ENCODE measurements at regions of chr22 and their contacts with region 1.

Region 1: GRCh38 chr22:45553351-45554039 is 50.8 kb downstream of the FBLN1 start:
- DNase-seq: peak; percentile 51 to 95
- H3K4me3 ChIP-seq: no peak overlapping the region
- H3K27ac ChIP-seq: no peak overlapping the region
- H3K4me1 ChIP-seq: no peaks in the 10 kb centered on the region
- H3K27me3 ChIP-seq: no peaks in the 10 kb centered on the region
- CTCF ChIP-seq: peak; percentile 85 to 99 (median 99)
- EP300 ChIP-seq: no peak
- POLR2A ChIP-seq: no peak
- RAD21 ChIP-seq: peak; percentile 87 to 90

Region 2: DNA sequence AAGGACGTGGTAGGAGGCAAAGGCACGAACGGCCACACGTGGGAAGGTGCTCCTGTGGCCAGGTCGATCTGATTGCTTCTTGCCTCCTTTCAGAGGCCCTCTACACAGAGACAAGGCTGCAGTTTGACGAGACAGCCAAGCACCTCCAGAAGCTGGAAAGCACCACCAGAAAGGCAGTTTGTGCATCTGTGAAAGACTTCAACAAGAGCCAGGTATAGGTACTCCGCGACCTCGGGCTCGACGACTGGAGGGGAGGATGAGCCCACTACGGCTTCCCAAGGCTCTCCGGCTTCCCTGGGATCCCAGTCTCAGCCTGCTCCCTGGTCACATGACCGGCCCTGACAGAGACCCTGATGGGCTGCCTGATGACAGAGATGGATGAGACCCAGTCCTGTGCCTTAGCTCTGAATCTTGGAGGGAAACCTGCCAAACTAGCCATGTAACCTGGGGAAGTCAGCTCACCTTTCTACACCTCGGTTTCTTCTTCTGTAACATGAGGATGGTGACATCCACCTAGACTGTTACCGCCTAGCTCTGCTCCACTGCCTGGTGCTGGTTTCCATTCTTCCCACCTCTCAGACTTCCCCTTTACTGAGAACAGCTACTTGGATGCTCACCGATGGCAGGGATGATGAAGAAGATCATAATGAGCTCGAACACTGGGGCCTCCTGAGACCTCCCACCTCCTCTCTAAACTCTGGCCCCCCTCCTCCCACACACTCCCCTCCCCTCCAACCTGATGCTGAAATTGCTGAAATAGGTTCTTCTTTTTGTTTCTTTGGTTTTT is 131.1 kb before region 1 on chr22:
- CTCF ChIA-PET with region 1: no interaction called
- POLR2A ChIA-PET with region 1: no interaction called
- DNase-seq: peak in 1 of 2 experiments; percentile 41
- H3K4me3 ChIP-seq: no peak overlapping the region
- H3K27ac ChIP-seq: no peak overlapping the region
- H3K4me1 ChIP-seq: no peaks in the 10 kb centered on the region; a peak in 1 of 7 replicates
- H3K27me3 ChIP-seq: no peaks in the 10 kb centered on the region
- CTCF ChIP-seq: no peak
- EP300 ChIP-seq: no peak
- POLR2A ChIP-seq: no peak
- RAD21 ChIP-seq: no peak

Region 3: GRCh38 chr22:45441138-45441537 is 112.4 kb before region 1 on chr22:
- CTCF ChIA-PET with region 1: interaction called, 30 read pairs
- POLR2A ChIA-PET with region 1: no interaction called
- DNase-seq: no peak
- H3K4me3 ChIP-seq: no peak overlapping the region
- H3K27ac ChIP-seq: no peak overlapping the region
- H3K4me1 ChIP-seq: no peaks in the 10 kb centered on the region; a peak in 2 of 7 replicates
- H3K27me3 ChIP-seq: no peaks in the 10 kb centered on the region
- CTCF ChIP-seq: peak; percentile 44 to 70 (median 58)
- EP300 ChIP-seq: no peak
- POLR2A ChIP-seq: no peak
- RAD21 ChIP-seq: peak; percentile 56 to 67

Region 4: DNA sequence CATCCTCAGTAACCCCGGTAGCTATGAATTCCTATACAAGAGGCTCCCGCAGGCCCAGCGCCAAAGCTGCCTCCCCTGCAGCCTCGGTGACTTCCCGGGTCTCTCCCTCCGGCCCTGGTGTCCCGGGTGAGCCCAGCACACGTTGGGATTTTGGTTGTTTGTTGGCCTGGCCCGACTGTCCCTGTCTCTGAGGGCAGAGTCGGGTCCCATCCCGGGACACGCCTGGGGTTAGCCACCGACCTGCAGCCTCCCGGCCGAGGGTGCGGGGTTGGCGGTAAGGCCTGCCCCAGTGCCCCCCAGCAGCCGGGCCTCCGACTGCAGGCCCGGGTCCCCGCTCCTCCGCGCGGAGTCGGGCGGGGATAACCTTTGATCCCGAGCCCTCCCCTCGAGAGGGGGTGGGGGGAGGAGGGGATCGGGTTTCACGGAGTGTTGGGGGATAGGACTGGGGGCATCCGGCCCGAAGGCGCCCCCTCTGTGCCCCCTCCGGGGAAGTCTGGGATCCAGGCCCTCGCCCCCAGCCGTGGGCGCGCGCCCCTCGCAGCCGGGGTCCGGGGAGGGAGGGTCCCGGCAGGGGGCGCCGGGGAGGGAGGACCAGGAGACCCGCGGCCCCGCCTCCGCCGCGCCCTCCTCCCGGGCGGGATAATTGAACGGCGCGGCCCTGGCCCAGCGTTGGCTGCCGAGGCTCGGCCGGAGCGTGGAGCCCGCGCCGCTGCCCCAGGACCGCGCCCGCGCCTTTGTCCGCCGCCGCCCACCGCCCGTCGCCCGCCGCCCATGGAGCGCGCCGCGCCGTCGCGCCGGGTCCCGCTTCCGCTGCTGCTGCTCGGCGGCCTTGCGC is 51.1 kb before region 1 on chr22 and contains the start of gene FBLN1:
- CTCF ChIA-PET with region 1: interaction called, 11 read pairs
- POLR2A ChIA-PET with region 1: no interaction called
- DNase-seq: peak in 1 of 2 experiments; percentile 86
- H3K4me3 ChIP-seq: peak within 1 kb of the TSS; percentile 72 to 87 (median 74)
- H3K27ac ChIP-seq: peak within 1 kb of the TSS; percentile 43
- H3K4me1 ChIP-seq: peaks cover 3 to 22% (median 16%) of the 10 kb centered on the region in 4 experiments
- H3K27me3 ChIP-seq: no peaks in the 10 kb centered on the region
- CTCF ChIP-seq: no peak
- EP300 ChIP-seq: no peak
- POLR2A ChIP-seq: peak in 1 of 2 experiments; percentile 21; a peak in 1 of 3 replicates
- RAD21 ChIP-seq: no peak
- total RNA-seq, gene FBLN1: 168 and 184 TPM in 2 replicates

Region 5: GRCh38 chr22:45531441-45532238 is 21.9 kb before region 1 on chr22:
- CTCF ChIA-PET with region 1: interaction called, 17 read pairs
- POLR2A ChIA-PET with region 1: no interaction called
- DNase-seq: no peak
- H3K4me3 ChIP-seq: no peak overlapping the region
- H3K27ac ChIP-seq: no peak overlapping the region
- H3K4me1 ChIP-seq: no peaks in the 10 kb centered on the region
- H3K27me3 ChIP-seq: no peaks in the 10 kb centered on the region
- CTCF ChIP-seq: no peak
- EP300 ChIP-seq: no peak
- POLR2A ChIP-seq: no peak
- RAD21 ChIP-seq: no peak

Region 6: GRCh38 chr22:45537734-45538181 is 15.7 kb before region 1 on chr22:
- CTCF ChIA-PET with region 1: interaction called, 17 read pairs
- POLR2A ChIA-PET with region 1: interaction called, 4 read pairs
- DNase-seq: no peak
- H3K4me3 ChIP-seq: no peak overlapping the region
- H3K27ac ChIP-seq: no peak overlapping the region
- H3K4me1 ChIP-seq: no peaks in the 10 kb centered on the region
- H3K27me3 ChIP-seq: no peaks in the 10 kb centered on the region; a peak in 1 of 7 replicates
- CTCF ChIP-seq: no peak
- EP300 ChIP-seq: no peak
- POLR2A ChIP-seq: no peak
- RAD21 ChIP-seq: no peak

Region 7: DNA sequence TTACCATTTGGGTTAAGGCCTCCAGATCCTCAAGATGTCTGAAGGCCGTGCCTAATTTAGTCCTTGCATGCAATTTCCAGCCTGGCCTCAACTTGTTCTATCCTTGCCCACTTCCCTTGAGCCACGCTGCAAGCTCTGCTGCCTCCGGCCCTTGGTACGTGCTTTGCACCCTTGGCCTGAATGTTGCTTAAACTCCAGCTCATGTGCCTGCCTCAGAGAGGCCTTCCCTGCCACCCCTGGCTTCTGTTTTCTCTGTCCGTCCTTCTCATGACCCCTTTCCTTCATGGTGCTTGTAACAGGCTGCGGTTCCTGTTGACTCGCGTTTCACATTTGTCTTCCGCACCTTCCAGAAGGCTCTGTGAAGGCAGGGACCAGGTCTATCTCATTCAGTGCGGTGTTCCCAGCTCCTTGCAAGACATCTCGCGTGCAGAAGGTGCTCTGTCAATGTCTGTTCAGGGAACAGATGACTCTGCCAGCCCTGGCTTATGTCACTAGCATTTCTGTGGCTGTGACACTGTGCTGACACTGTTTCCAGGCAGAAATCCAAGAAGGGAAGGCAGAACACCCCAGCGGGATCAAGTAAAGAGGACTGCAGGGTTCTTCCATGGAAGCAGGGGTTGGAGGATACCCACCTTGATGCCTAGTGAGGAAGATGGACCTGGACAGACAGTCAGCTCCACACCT is 11.0 kb after region 1 on chr22:
- CTCF ChIA-PET with region 1: interaction called, 39 read pairs
- POLR2A ChIA-PET with region 1: no interaction called
- DNase-seq: no peak
- H3K4me3 ChIP-seq: no peak overlapping the region
- H3K27ac ChIP-seq: no peak overlapping the region
- H3K4me1 ChIP-seq: peaks cover 0 to 10% (median 1%) of the 10 kb centered on the region in 4 experiments; a peak in 2 of 7 replicates
- H3K27me3 ChIP-seq: no peaks in the 10 kb centered on the region; a peak in 2 of 7 replicates
- CTCF ChIP-seq: no peak
- EP300 ChIP-seq: no peak
- POLR2A ChIP-seq: no peak
- RAD21 ChIP-seq: no peak

Region 8: GRCh38 chr22:45572423-45572822 is 18.9 kb after region 1 on chr22:
- CTCF ChIA-PET with region 1: interaction called, 39 read pairs
- POLR2A ChIA-PET with region 1: no interaction called
- DNase-seq: no peak
- H3K4me3 ChIP-seq: no peak overlapping the region
- H3K27ac ChIP-seq: no peak overlapping the region
- H3K4me1 ChIP-seq: no peaks in the 10 kb centered on the region
- H3K27me3 ChIP-seq: no peaks in the 10 kb centered on the region
- CTCF ChIP-seq: no peak
- EP300 ChIP-seq: no peak
- POLR2A ChIP-seq: no peak
- RAD21 ChIP-seq: no peak

Measured in H1 (cell line).